OCI-LY7 (cell line): ENCODE measurements at regions of chr11 and their contacts with region 1.

Region 1: GRCh38 chr11:78223320-78223954 is 34.7 kb downstream of the USP35 start:
- DNase-seq: peak; percentile 71
- H3K4me3 ChIP-seq: peak overlapping the region; percentile 10
- H3K27ac ChIP-seq: peak overlapping the region; percentile 54
- H3K4me1 ChIP-seq: peaks cover 47% of the 10 kb centered on the region
- CTCF ChIP-seq: no peak

Region 2: DNA sequence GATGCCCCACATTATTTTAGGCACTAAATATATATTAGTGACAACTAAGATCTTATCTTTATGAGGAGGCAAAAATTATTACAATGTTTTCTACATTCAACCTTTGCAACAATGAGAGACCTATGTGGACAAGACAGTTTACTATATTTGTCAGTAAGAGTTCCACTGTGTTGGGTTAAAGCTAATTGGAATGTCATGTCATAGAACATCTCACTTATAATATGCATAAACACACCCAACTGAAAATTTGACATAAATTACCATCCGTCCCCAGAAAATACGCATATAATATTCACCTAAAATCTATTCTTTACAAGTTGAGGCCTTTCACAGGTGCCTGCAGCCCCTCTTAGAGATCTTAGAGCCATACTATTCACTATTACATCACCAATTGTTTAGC is 487.0 kb before region 1 on chr11:
- CTCF ChIA-PET with region 1: no interaction called
- POLR2A ChIA-PET with region 1: no interaction called
- intact Hi-C with region 1: no loop called
- DNase-seq: no peak
- H3K4me3 ChIP-seq: no peak overlapping the region
- H3K27ac ChIP-seq: no peak overlapping the region
- H3K4me1 ChIP-seq: no peaks in the 10 kb centered on the region
- CTCF ChIP-seq: no peak

Region 3: DNA sequence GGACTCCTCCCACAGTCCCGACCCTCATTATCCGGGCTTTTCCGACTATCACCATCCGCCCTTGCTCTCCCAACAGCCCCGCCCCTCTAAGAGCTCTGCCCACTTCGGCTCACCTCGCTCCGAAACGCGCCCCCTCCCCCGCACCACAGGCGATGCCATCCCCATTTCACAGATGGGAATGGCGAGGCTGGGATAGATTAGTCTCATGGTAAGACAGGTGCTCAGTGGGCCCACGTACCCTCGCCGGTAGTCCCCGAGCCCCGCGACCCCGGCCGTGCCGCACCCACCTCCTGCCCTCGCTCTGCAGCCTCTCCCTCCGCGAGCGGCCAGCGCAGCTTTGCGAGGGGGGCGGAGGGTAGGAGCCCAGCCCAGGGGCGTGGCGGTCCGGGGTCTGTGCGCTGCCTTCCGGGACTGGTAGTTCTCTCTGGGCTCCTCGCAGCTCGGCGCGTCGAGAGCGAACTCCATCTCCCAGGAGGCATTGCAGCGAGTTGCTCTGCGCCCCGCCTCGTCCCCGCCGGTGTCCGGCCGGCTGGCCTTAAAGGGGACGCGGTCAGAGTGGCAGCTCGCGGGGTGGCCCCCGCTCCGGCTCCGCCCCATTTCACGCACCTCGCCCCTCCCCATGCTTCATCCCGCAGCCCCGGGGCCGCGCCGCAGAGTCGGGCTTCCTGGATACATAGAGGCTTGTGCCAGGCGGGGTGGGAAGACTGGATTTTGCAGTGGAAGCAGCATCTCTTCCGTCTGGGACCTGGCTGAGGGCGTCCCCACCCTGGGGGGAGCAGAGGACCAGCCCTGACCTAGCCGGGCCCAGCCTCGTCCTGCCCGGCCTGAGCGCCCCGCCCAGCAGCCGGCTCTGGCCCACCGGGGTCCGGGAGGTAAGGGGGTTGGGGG is 34.9 kb before region 1 on chr11 and contains the starts of genes KCTD21 and USP35:
- CTCF ChIA-PET with region 1: no interaction called
- POLR2A ChIA-PET with region 1: interaction called, 3 read pairs
- intact Hi-C with region 1: loop called (anchors 2 kb)
- DNase-seq: peak; percentile 95
- H3K4me3 ChIP-seq: peak within 1 kb of the TSS; percentile 79
- H3K27ac ChIP-seq: no peak within 1 kb of the TSS
- H3K4me1 ChIP-seq: peaks cover 24% of the 10 kb centered on the region
- CTCF ChIP-seq: no peak
- total RNA-seq, gene KCTD21: 1.5 and 2.8 TPM in 2 replicates
- total RNA-seq, gene USP35: 3.2 and 3.4 TPM in 2 replicates

Region 4: GRCh38 chr11:78205691-78206090 is 17.7 kb before region 1 on chr11:
- CTCF ChIA-PET with region 1: no interaction called
- POLR2A ChIA-PET with region 1: no interaction called
- intact Hi-C with region 1: no loop called
- DNase-seq: no peak
- H3K4me3 ChIP-seq: no peak overlapping the region
- H3K27ac ChIP-seq: no peak overlapping the region
- H3K4me1 ChIP-seq: peaks cover 15% of the 10 kb centered on the region
- CTCF ChIP-seq: no peak